AG04450 (cell line): ENCODE measurements at regions of chr18 and their contacts with region 1.

Region 1: DNA sequence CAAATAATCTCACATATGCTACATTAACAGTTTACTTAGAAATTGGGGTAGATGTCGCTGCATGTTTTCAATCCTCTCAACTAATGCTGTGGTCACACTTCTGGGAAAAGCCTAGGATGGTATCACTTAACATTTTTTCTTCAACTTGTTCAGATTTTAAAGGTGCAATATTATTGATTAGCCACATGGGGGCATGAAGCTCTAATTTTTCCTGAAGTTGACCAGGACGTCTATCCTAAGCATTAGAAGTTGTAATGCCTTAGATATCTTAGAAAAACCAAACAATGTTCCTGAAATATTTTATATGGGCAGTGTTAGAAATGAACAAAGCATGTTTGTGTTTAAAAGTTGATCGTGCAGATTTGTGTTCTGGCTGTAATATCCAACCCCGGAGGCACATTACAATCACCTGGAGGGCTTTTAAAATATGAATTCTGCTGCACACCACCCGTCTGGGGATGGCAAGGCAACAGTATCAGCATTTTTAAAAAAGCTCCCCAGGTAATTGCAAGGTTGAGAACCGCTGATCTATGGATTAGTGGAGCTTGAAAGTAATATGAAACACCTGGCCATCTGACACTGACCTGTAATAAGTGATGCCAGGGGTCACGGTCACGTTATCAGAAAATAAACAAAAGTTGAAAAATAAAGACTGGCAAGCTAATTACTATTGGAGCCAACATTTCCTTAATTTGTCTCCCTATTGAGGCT is 100.5 kb upstream of the LMAN1 start:
- DNase-seq: peak; percentile 33
- H3K4me3 ChIP-seq: no peak overlapping the region
- H3K27ac ChIP-seq: peak overlapping the region; percentile 39
- H3K27me3 ChIP-seq: no peaks in the 10 kb centered on the region
- CTCF ChIP-seq: peak; percentile 60

Region 2: DNA sequence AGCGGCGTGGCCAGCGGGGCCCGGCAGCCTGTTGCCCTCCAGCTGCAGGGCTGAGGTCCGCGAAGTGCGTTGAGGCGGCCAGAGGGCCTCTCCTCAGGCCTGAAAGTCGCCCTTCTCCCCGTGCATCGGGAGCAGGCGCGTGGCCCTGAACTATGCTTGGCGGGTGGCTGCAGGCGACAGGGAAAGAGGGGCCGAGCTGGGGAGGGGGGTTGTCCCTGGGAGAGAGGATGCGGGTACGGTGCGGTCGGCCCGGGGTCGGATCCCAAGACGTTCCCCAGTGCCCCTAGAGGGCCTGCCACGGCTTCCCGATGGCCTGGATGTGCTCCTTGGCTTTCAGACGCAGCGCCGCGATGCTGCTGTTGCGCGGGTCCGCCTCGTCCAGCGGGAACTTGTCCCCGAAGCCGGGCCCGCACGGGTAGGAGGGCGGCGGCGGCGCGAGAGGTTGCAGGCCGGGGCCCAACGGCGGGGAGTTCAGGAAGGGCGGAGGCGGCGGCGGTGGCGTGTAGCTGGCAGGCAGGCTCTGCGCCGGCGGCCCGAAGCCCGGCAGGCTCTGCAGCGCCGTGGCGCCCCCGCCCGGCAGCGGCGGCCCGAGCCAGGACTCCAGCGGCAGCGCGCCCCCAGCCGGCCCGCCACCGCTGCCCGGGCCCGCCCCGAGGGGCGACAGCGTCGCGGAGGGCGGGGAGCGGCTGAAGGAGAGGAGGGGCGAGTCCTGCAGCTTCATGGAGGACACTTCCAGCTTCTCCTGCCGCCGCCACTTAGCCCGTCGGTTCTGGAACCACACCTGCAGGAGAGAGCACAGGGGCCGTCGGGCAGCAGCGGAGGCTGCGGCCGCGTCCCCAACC is 190.6 kb before region 1 on chr18:
- CTCF ChIA-PET with region 1: no interaction called
- POLR2A ChIA-PET with region 1: no interaction called
- DNase-seq: no peak
- H3K4me3 ChIP-seq: no peak overlapping the region
- H3K27ac ChIP-seq: no peak overlapping the region
- H3K27me3 ChIP-seq: peaks cover 96% of the 10 kb centered on the region
- CTCF ChIP-seq: no peak

Region 3: DNA sequence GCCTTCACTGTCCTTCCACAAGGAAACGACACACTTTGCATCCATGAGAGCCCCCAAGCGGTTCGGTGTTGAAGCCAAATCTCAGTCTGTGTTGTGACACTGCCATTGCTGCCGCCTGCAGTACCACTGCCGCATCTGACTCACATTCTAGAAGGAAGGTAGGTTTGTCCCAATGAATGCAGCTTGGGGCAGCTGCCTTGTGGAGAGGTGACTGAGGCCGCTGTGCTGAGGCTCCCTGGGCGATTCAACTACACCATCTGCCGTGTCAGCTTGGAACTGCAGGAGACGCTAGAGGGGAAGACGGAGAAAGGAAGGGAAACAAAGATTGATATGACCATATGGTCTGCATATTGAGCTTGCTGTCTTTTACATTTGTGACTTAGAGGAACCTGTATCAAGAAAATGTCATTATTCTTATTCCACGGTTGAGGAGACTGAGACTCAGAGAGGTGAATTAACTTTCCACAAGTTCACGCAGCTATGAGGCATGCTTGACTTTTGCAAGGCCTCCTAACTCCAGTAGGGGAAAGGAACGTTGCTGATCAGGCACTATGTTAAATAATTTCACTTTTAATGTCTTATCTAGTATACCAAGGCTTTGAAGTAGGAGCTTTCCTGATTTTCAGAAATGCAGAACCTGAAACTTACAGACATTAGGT is 57.0 kb before region 1 on chr18:
- CTCF ChIA-PET with region 1: interaction called, 12 read pairs
- POLR2A ChIA-PET with region 1: no interaction called
- DNase-seq: peak; percentile 29
- H3K4me3 ChIP-seq: no peak overlapping the region
- H3K27ac ChIP-seq: no peak overlapping the region
- H3K27me3 ChIP-seq: no peaks in the 10 kb centered on the region
- CTCF ChIP-seq: peak; percentile 97

Region 4: DNA sequence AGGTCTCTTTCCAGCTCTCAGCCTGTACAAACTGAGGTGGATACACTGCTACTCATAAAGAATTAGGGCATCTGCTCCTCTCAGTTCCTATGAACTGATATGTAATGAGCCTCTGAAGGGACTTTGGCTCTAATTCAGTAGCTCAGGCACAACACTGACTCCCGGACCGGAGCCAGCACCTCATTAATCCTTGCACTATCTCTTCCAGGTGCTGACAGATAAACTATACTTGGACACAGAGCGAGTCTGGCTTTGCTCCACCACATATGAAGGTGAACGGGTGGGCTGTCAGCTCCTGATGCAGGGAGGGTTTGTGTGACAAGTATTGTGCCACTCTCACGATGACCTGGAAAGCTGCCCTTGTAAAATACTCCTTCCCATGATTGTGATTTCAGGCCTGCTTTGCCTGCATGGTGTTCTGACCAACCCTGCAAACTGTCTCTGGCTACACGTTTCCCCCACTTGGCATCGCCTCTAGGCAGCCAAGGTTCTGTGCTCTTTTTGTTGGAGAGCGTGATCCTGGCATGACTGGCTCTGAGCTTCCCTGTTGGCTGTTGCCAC is 11.1 kb after region 1 on chr18:
- CTCF ChIA-PET with region 1: interaction called, 11 read pairs
- POLR2A ChIA-PET with region 1: no interaction called
- DNase-seq: no peak
- H3K4me3 ChIP-seq: no peak overlapping the region
- H3K27ac ChIP-seq: no peak overlapping the region
- H3K27me3 ChIP-seq: no peaks in the 10 kb centered on the region
- CTCF ChIP-seq: no peak

Region 5: DNA sequence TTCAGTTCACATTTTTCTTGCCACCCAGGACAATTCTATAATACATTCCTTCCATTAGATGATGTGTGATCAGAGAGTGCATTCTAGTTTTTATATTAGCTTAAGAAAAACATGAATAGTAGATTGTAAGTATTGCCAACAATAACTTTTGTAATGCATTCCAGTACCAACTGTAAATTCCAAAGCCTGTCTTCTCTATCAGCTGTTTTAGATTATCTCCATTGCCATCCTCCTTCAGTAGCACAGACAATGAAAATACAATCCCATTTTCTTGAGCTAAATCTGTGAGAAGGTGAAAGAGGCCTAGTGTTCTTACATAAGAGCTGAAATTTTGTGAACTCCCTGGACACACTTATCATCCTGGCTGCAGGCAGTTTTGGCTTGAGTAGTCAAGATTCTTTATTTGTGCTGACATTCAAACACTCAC is 133.8 kb after region 1 on chr18:
- CTCF ChIA-PET with region 1: interaction called, 10 read pairs
- POLR2A ChIA-PET with region 1: no interaction called
- DNase-seq: peak; percentile 7
- H3K4me3 ChIP-seq: no peak overlapping the region
- H3K27ac ChIP-seq: no peak overlapping the region
- H3K27me3 ChIP-seq: no peaks in the 10 kb centered on the region
- CTCF ChIP-seq: no peak

Region 6: DNA sequence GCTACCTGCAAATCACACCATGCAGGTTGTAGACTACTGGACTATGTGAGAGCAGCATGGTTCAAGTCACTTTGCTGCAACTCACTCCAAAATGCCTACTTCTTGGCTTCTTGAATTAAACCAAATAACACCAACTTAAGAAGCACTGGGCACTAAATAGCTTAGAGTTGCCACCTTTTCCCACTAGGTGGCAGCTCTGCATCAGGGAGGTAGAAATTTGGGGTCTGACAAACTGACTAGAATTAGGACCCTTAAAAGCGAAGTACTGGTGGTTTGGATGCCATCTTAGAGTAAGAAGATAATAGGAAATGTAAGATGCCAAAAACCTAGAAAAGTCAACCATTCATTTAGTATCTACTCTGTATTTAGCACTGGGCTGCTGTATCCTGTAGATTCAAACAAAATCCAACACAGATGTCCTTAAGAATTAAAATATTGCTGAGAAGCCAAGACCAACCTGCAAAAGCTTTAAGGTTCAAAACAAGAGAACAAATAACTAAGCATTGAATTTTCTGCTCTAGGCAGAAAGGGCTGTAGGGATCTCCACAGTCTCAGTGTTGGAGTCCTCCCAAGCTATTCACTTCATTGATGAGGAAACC is 172.2 kb after region 1 on chr18:
- CTCF ChIA-PET with region 1: interaction called, 38 read pairs
- POLR2A ChIA-PET with region 1: no interaction called
- DNase-seq: no peak
- H3K4me3 ChIP-seq: no peak overlapping the region
- H3K27ac ChIP-seq: no peak overlapping the region
- H3K27me3 ChIP-seq: no peaks in the 10 kb centered on the region
- CTCF ChIP-seq: peak; percentile 87

Region 7: DNA sequence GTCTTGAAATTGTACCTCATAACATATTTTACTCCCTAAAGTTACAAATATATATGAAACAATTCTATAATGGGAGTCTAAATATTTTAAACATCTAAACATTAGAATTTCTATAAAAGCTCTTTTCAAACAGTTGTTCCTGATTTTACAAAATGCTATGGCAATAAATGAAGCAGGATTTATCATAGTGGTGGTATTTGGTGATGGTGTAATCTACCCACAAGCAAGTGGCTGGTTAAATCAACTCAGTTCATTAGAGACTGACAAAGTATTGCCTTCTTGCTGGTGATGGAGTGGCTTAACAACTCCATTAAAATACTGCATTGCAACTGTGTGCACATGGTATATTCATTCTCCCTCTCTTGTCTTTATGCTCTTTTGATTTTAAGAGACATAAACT is 579.2 kb after region 1 on chr18:
- CTCF ChIA-PET with region 1: no interaction called
- POLR2A ChIA-PET with region 1: no interaction called
- DNase-seq: no peak
- H3K4me3 ChIP-seq: no peak overlapping the region
- H3K27ac ChIP-seq: no peak overlapping the region
- H3K27me3 ChIP-seq: no peaks in the 10 kb centered on the region
- CTCF ChIP-seq: no peak